ENCODE measurements at regions of chr20 and their contacts with region 1.

Region 1: GRCh38 chr20:62437927-62438326 is 10.6 kb upstream of the RBBP8NL start:
- DNase-seq: no peak
- ATAC-seq: no peak
- H3K4me3 ChIP-seq: no peak overlapping the region
- H3K27ac ChIP-seq: no peak overlapping the region
- H3K4me1 ChIP-seq: no peaks in the 10 kb centered on the region
- H3K27me3 ChIP-seq: no peaks in the 10 kb centered on the region
- CTCF ChIP-seq: no peak

Region 2: DNA sequence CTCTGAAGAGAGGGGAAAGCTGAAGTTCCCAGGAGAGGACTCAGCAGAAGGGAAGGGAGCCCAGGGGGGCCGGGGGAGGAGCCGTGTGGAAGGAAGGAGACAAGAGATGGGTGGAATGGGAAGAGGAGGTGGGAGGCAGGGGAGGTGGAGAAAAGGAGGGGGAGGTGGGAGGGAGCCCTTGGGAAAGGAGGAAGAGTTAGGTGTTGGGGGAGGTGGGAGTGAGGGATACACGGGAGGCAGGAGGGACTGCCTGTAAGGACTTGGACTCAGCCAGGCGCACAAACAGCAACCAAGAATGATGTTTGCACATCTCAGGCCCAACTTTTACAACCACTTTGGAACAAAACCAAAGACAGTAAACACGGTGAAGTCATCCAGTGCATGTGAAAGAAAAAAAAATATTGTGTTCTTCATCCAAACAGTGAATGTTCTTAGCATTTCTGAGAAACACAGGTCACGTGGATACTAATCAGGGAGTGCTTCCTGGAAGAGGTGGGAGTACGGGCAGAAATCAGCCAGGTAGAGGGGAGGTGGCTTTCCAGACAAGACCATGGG is 333.1 kb before region 1 on chr20:
- intact Hi-C with region 1: no loop called
- DNase-seq: no peak
- ATAC-seq: peak in 1 of 4 donors; percentile 24
- H3K4me3 ChIP-seq: no peak overlapping the region
- H3K27ac ChIP-seq: no peak overlapping the region
- H3K4me1 ChIP-seq: no peaks in the 10 kb centered on the region
- H3K27me3 ChIP-seq: no peaks in the 10 kb centered on the region
- CTCF ChIP-seq: no peak

Region 3: DNA sequence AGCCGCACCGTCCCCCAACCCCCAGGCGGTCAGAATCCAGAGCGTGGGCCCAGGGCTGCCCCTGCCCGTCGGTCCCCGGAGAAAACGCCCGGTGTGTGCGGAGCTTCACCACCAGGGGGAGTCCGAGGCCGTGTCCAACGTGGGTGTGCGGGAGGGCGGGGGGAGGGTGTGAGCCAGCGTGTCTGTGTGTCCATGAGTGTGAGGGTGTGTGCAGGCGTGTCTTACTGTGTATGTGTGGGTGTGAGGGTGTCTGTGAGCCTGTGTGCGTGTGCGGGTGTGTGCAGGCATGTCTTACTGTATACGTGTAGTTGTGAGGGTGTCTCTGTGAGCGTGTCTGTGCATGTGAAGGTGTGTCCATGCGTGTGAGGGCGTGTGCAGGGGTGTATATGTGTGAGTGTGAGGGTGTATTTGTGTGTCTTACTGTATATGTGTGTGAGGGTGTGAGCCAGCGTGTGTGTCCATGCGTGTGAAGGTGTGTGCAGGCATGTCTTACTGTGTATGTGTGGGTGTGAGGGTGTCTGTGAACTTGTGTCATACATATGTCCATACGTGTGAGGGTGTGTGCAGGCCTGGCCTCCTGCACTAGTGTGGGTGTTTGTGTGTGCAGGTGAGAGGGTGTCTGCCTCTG is 62.4 kb after region 1 on chr20:
- intact Hi-C with region 1: loop called in 1 of 3 experiments (anchors 10 kb)
- DNase-seq: peak; percentile 58 to 93 (median 81)
- ATAC-seq: peak; percentile 64 to 83 (median 80)
- H3K4me3 ChIP-seq: no peak overlapping the region
- H3K27ac ChIP-seq: no peak overlapping the region
- H3K4me1 ChIP-seq: peaks cover 7 to 10% (median 8%) of the 10 kb centered on the region in 3 donors
- H3K27me3 ChIP-seq: no peaks in the 10 kb centered on the region
- CTCF ChIP-seq: peak; percentile 67 to 86 (median 72)

Region 4: DNA sequence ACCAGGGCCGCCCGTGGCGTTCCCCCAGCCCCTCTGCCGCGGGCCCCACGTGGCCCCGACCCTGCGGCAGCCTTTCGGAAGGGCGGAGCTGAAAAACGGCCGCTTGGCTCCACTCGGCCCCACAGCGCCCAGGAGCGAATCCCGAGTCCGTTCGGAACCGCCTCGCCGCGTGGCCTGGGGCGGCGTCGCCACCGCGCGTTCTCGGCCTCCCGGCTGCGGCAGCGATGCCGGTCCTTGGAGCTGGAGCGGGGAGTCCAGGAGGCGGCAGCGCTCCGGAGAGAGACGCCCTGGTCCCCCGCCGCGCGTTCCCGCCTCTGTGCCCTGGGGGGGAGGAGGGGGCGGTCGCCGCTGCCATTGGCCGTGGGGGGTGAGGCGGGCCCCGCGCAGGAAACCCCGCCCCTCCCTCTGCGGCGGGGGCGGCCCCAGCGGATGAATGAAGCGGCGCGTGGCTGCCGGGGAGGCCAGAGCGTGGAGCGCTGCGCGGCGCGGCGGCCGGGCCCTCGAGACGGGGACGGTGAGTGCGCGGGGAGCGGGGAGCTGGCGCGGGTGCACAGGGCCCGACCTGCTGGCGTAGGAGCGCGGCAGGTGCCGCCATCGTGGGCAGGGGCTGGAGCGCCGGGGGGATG is 204.2 kb after region 1 on chr20 and contains the start of gene SLCO4A1:
- intact Hi-C with region 1: no loop called
- DNase-seq: peak in 5 of 6 donors; percentile 44 to 81 (median 64)
- ATAC-seq: peak; percentile 69 to 87 (median 80)
- H3K4me3 ChIP-seq: peak within 1 kb of the TSS; percentile 27 to 49 (median 44)
- H3K27ac ChIP-seq: no peak within 1 kb of the TSS
- H3K4me1 ChIP-seq: peaks cover 0 to 13% (median 5%) of the 10 kb centered on the region in 3 donors
- H3K27me3 ChIP-seq: no peaks in the 10 kb centered on the region
- CTCF ChIP-seq: no peak
- total RNA-seq, gene SLCO4A1: 1.2 to 5.1 (median 1.8) TPM